ENCODE measurements at regions of chr10 and their contacts with region 1.

Region 1: DNA sequence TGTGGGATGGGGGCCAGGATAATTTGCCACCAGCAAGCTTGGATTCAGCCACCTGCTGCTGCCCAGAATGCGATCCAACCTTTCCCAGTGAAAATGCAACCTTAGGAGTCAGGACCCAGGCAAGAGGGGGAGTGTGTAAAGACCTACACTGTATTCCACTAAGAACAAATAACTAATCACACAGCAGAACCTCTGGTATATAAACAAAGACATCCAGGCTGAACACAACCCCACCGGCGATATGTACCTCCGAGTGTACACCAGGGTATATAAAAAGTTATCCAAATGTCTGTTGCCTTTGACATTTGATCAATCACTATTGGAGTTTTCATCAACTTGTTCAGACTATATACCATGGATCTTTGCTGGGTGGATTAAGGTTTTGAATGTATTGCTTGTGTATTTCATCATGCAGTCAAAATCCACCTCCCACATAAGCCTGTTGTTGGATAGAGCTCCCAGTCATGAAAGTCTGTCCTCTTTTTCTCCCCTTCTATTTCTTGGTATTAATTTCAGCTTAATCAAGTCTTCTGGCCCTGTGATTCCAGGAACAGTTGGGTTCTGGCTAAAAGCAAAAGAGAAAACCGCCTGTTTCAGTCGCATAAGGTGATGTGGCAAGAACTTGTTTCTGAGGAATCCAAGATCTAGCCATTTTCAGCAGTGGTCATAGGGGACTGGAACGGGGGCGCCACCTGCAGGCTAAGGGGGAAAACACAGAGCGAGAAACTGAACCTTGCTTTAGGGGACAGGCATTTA is 290.7 kb downstream of the CCDC3 start:
- DNase-seq: peak; percentile 92
- ATAC-seq: peak; percentile 81
- H3K4me3 Mint-ChIP-seq: no peak overlapping the region
- H3K27ac Mint-ChIP-seq: peak overlapping the region; percentile 91
- H3K4me1 Mint-ChIP-seq: peaks cover 70% of the 10 kb centered on the region
- H3K27me3 Mint-ChIP-seq: no peaks in the 10 kb centered on the region

Region 2: DNA sequence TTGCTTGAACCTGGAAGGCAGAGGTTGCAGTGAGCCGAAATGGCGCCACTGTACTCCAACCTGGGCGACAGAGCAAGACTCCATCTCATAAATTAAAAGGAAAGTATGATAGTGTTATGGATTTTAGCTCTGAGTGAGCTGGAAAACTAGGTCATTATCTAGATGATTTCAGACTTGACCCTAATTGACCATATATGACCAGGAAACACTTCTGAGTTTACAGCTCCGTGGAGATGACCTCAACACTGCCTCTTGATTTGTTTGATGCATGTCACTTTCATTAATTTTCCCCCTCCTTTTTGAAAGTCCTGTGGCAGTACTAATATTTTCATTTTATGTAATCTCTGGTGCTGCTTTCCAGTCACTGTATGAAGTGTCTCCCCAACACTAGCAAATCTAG is 589.1 kb before region 1 on chr10:
- CTCF ChIA-PET with region 1: no interaction called
- POLR2A ChIA-PET with region 1: no interaction called
- intact Hi-C with region 1: loop called in 1 of 2 experiments (anchors 5 kb)
- DNase-seq: no peak
- ATAC-seq: no peak
- H3K4me3 Mint-ChIP-seq: peak overlapping the region; percentile 54
- H3K27ac Mint-ChIP-seq: peak overlapping the region; percentile 94
- H3K4me1 Mint-ChIP-seq: peaks cover 32% of the 10 kb centered on the region
- H3K27me3 Mint-ChIP-seq: no peaks in the 10 kb centered on the region

Region 3: DNA sequence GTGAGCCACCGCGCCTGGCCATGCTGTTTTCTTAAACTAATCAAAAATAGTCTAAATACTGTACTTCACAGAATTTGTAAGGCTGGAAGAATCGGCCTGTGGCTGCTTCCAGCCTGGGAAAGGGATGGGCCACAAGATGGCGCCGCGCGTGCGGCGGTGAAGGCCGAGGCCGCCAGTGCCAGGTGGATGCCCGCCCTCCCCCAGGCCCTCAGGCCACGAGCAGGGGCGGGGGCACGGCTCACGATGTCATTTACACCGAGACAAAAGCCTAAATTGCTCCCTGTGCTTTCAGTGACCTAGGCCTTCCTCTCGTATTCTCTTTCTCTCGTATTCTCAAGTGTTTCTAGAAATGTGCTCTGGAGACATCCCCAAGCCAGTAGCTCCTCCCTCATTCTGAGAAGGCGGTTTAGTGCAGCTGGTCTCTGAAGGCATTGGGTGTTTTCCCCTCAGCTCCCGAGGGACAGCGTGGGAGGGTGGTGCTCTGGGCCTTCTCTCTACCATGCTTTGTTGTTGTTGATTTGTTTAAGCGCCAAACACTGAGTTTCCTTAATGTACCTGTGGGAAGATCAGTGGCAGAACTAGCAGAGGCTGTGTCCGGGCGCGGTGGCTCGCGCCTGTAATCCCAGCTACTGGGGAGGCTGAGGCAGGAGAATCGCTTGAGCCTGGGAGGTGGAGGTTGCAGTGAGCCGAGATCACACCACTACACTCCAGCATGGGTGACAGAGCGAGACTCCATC is 446.4 kb before region 1 on chr10:
- CTCF ChIA-PET with region 1: interaction called, 9 read pairs
- POLR2A ChIA-PET with region 1: no interaction called
- intact Hi-C with region 1: loop called (anchors 1 kb)
- DNase-seq: peak; percentile 88
- ATAC-seq: peak; percentile 93
- H3K4me3 Mint-ChIP-seq: peak overlapping the region; percentile 42
- H3K27ac Mint-ChIP-seq: peak overlapping the region; percentile 83
- H3K4me1 Mint-ChIP-seq: peaks cover 17% of the 10 kb centered on the region
- H3K27me3 Mint-ChIP-seq: no peaks in the 10 kb centered on the region

Region 4: DNA sequence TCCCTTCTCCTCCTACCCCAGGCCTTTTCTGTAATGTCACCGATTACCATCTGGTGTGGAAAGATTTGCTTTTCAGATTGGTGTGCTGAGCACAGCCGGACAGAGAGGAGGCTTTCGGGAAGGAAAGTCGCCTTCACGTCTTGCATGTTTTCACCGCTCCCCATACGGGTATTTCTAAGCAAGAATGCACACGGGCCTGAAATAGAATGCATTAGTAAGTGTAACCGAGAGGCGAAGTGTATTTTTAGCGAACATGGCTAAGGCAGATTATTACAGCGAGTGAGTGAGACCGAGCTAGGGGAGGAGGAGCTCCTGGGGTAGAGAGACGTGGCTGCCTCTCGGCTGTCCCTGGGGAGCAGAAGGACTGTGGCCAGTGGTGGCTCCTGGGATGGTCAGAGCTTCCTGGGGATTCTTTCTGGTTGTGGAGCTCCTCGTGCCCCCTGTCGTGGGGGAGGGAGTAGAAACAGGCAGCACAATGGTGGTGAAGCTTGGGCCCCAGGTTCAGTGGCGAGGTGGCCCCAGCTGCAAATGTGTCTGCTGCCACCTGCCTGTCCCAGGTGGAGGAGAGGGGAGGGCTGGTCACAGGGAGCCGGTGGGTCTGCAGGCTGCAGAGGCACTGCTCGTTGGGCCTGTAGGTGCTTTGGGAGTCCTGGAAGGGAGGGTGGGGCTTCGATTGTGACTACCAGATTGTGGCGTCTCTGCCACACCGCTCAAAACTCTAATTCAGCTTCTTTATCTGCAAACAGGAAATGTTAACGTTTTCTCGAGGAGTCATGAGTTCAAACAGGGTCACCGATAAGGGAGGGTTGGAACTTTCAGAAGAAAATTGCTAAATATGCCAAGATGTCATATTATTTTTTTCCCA is 225.6 kb before region 1 on chr10:
- CTCF ChIA-PET with region 1: no interaction called
- POLR2A ChIA-PET with region 1: no interaction called
- intact Hi-C with region 1: loop called in 1 of 2 experiments (anchors 10 kb)
- DNase-seq: peak; percentile 64
- ATAC-seq: peak; percentile 82
- H3K4me3 Mint-ChIP-seq: peak overlapping the region; percentile 4
- H3K27ac Mint-ChIP-seq: peak overlapping the region; percentile 73
- H3K4me1 Mint-ChIP-seq: peaks cover 25% of the 10 kb centered on the region
- H3K27me3 Mint-ChIP-seq: no peaks in the 10 kb centered on the region

Region 5: DNA sequence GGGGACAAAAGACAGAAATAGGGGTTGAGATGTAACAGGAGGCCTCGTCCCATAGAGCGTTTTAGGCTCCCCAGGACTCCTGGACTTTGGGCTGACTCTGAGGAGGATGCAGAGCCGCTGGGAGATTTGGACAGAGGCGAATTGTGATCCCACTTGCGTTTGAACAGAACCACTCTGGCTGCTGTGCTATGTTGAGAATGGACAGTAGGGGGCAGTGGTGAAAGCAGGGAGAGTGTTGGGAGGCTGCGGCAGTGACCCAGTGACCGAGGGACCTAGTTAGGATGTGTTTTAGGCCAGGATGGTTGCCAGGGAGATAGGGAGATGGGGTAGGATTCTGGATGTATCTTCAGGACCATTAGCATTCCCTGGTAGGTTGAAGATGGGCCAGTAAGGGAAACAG is 19.1 kb after region 1 on chr10:
- CTCF ChIA-PET with region 1: interaction called, 36 read pairs
- POLR2A ChIA-PET with region 1: interaction called, 5 read pairs
- intact Hi-C with region 1: loop called in 1 of 2 experiments (anchors 1 kb)
- DNase-seq: peak; percentile 46
- ATAC-seq: no peak
- H3K4me3 Mint-ChIP-seq: no peak overlapping the region
- H3K27ac Mint-ChIP-seq: no peak overlapping the region
- H3K4me1 Mint-ChIP-seq: peaks cover 14% of the 10 kb centered on the region
- H3K27me3 Mint-ChIP-seq: no peaks in the 10 kb centered on the region

Region 6: DNA sequence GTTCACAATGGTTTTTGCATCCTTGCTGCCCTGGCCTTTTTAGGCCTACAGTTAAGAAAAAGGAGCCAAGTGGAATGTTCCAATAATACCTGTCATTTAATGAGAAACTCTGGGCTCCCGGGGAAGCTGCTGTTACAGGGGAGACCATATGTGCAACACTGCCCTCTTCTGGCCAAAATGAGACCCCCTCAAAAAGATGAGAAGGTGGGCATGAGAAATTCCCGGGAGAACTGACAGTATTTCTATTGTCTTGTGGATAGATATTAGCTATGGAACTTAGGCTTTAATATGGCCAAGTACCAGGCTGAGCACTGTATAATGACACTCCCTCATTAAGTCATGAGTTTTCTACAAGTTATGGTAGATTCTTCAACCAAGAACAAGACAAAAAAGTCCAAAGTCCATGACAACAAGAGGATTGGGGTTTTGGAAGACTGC is 191.4 kb after region 1 on chr10:
- CTCF ChIA-PET with region 1: interaction called, 14 read pairs
- POLR2A ChIA-PET with region 1: no interaction called
- intact Hi-C with region 1: loop called (anchors 1 kb)
- DNase-seq: peak; percentile 72
- ATAC-seq: peak; percentile 53
- H3K4me3 Mint-ChIP-seq: no peak overlapping the region
- H3K27ac Mint-ChIP-seq: no peak overlapping the region
- H3K4me1 Mint-ChIP-seq: no peaks in the 10 kb centered on the region
- H3K27me3 Mint-ChIP-seq: peaks cover 11% of the 10 kb centered on the region

Region 7: DNA sequence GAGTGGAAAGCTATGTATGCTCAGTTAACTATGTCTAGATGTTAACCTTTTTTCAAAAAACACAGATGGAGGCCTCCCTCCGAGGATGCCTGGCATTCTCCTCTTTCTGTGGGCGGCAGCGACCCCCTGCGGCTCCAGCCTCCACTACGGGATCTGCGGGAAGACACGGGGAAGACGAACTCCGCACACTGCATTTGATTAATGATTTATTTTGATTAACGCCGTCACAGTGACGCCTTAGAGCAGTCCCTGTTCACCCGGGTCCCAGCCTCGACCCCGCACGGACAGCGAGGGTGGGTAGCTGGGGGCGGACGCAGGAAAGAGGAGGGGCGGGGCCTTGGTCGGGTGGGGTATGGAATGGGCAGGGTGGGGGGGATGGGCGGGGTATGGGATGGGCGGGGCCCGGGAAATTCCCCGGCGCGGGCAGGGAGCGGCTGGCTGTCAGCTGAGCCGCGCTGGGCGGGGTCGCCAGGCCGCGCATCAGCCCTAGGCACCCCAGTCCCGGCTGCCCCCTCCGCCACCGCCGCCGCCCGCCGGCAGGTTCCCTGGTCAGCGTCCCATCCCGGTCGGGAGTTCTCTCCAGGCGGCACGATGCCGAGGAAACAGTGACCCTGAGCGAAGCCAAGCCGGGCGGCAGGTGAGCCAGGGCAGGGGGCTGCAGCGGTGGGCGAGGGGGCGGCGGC is 389.0 kb after region 1 on chr10 and contains the start of gene OPTN:
- CTCF ChIA-PET with region 1: no interaction called
- POLR2A ChIA-PET with region 1: no interaction called
- intact Hi-C with region 1: loop called (anchors 5 to 10 kb)
- DNase-seq: peak; percentile 87
- ATAC-seq: peak; percentile 80
- H3K4me3 Mint-ChIP-seq: peak within 1 kb of the TSS; percentile 84
- H3K27ac Mint-ChIP-seq: peak within 1 kb of the TSS; percentile 90
- H3K4me1 Mint-ChIP-seq: peaks cover 37% of the 10 kb centered on the region
- H3K27me3 Mint-ChIP-seq: no peaks in the 10 kb centered on the region
- total RNA-seq, gene OPTN: 57.4 to 67.8 TPM